Endothelial cell of umbilical vein (primary cell): ENCODE measurements at regions of chr15 and their contacts with region 1.

Region 1: GRCh38 chr15:61834076-61834697 is 226.1 kb downstream of the VPS13C start:
- DNase-seq: peak; percentile 72
- H3K4me3 ChIP-seq: no peak overlapping the region
- H3K27ac ChIP-seq: no peak overlapping the region
- H3K4me1 ChIP-seq: no peaks in the 10 kb centered on the region
- H3K27me3 ChIP-seq: peaks cover 4 to 7% of the 10 kb centered on the region in 2 experiments
- CTCF ChIP-seq: peak; percentile 87 to 98
- POLR2A ChIP-seq: no peak

Region 2: GRCh38 chr15:61169904-61170695 is 664.1 kb before region 1 on chr15:
- CTCF ChIA-PET with region 1: interaction called, 430 read pairs
- POLR2A ChIA-PET with region 1: no interaction called
- dilution Hi-C with region 1: no loop called
- intact Hi-C with region 1: loop called (anchors 1 kb)
- DNase-seq: no peak
- H3K4me3 ChIP-seq: no peak overlapping the region
- H3K27ac ChIP-seq: no peak overlapping the region
- H3K4me1 ChIP-seq: peaks cover 13% of the 10 kb centered on the region
- H3K27me3 ChIP-seq: no peaks in the 10 kb centered on the region
- CTCF ChIP-seq: no peak
- POLR2A ChIP-seq: no peak

Region 3: DNA sequence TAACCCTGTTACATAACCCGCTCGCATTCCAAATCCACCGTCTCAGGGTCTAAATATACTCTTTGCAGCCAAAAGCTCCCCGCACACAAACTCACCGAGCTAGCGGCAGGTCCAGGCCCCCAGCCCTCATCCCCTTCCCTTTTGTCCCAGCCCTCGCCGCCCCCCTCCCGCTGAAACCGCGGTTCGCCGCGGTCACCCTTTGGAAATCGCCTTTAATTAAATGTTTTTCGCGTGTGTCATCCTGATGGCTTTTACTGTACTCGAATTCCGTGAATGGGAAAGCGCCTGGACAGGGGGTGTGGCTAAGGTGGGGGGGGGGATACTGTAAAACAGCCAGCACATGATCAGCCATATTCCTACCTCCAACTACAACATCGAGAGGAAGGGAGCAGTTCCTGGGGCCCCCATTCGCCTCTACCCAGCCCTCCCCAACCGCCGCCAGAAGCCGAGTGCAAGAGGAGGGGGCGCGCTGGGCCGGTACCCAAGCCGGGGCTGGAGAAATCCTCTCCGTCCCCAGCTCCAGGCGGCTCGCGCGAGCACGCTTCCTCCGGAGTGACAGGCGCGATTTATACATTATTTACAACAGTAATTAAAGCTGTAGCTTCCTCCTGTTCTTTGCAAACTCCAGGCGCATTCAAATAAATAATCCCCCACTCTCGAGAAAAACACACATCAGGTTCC is 606.8 kb before region 1 on chr15:
- CTCF ChIA-PET with region 1: interaction called, 24 read pairs
- POLR2A ChIA-PET with region 1: no interaction called
- dilution Hi-C with region 1: no loop called
- intact Hi-C with region 1: no loop called
- DNase-seq: peak; percentile 41
- H3K4me3 ChIP-seq: peak overlapping the region; percentile 53 to 84 (median 72)
- H3K27ac ChIP-seq: no peak overlapping the region
- H3K4me1 ChIP-seq: peaks cover 9% of the 10 kb centered on the region
- H3K27me3 ChIP-seq: peaks cover 25 to 28% of the 10 kb centered on the region in 2 experiments
- CTCF ChIP-seq: no peak
- POLR2A ChIP-seq: no peak

Region 4: DNA sequence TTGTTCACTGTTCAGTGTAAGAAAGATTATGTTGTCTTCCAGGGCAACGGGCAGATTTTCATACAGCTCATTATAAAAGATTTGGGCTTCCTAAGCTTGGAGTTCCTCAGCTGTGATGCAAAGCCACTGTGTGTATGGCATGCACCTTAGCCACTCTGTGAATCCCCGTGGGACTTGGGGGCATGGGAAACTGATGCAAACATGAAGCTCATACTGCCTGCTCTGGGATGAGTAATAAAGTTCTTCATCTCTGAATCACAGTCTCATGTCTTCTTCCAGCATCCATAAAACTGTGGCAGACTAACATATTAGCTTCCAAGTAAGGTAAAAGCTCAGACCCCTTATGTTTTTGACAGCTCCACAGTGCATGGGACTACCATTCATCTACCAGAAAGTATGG is 450.8 kb before region 1 on chr15:
- CTCF ChIA-PET with region 1: no interaction called
- POLR2A ChIA-PET with region 1: no interaction called
- dilution Hi-C with region 1: no loop called
- intact Hi-C with region 1: no loop called
- DNase-seq: no peak
- H3K4me3 ChIP-seq: no peak overlapping the region
- H3K27ac ChIP-seq: no peak overlapping the region
- H3K4me1 ChIP-seq: no peaks in the 10 kb centered on the region
- H3K27me3 ChIP-seq: no peaks in the 10 kb centered on the region
- CTCF ChIP-seq: no peak
- POLR2A ChIP-seq: no peak

Region 5: DNA sequence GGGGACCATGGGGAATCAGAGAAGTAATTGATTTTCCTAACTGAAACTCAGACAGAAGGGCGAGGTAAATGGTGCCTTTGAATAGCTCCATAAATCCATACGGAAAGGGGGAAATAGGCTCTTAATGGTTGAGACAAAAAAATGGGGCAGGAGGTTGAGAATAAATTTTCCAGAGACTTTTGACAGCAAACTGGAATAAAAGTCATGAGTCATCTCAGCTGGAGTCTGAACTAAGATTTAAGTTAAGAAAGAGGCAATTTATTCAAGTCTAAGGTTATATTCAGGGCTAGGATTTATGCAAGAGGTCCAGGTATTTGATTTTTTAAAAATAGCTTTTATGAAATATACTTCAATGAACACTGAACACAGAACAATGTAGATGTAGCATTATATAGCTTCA is 366.4 kb before region 1 on chr15:
- CTCF ChIA-PET with region 1: no interaction called
- POLR2A ChIA-PET with region 1: no interaction called
- dilution Hi-C with region 1: no loop called
- intact Hi-C with region 1: no loop called
- DNase-seq: no peak
- H3K4me3 ChIP-seq: no peak overlapping the region
- H3K27ac ChIP-seq: no peak overlapping the region
- H3K4me1 ChIP-seq: no peaks in the 10 kb centered on the region
- H3K27me3 ChIP-seq: peaks cover 1 to 4% of the 10 kb centered on the region in 2 experiments
- CTCF ChIP-seq: no peak
- POLR2A ChIP-seq: no peak

Region 6: DNA sequence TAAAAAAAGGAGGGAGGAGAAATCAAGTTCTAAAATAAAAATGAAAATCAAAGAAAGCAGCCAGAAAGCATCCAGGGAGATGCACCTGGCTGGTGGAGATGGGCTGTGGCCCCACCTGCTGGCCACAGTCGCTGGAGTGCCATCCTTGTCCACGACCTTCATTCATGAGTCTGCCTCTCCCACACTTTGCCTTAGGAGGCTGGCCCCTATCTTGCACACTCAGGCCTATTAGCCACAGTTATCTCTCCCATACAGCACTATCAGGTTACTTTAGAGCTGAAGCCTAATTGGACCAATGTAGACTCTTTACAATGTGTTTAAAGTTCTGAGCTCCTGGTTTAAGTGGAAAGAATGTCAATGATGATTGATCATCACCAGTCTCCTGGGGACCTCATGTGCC is 213.0 kb before region 1 on chr15:
- CTCF ChIA-PET with region 1: interaction called, 22 read pairs
- POLR2A ChIA-PET with region 1: no interaction called
- dilution Hi-C with region 1: no loop called
- intact Hi-C with region 1: no loop called
- DNase-seq: peak; percentile 21
- H3K4me3 ChIP-seq: no peak overlapping the region
- H3K27ac ChIP-seq: no peak overlapping the region
- H3K4me1 ChIP-seq: no peaks in the 10 kb centered on the region
- H3K27me3 ChIP-seq: no peaks in the 10 kb centered on the region
- CTCF ChIP-seq: peak; percentile 39 to 69
- POLR2A ChIP-seq: no peak

Region 7: DNA sequence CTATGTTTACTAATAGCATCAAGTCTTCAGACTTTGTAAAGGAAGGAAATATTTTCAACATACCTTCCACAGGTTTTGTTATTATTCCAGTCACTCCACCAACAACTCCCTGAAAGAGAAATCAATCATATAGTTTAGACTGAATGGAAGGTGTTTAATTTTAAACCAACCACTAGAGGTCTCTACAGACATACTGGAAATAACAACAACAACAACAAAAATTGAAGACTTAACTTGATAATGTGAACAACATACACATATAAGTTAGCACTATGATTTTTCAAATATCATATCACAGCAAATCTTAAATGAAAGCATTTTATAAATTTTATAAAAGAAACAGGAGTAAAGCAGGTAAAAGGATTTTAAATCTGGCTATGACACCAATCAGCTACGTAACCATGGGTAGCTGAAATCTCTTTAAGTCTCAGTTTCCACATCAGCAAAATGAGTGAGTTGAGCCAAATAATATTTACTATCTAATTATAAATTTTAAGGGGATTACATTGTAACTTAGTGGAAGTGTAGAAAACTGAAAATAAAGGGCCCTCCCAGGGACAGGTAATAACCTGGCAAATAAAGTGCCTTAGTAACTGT is 37.8 kb after region 1 on chr15:
- CTCF ChIA-PET with region 1: interaction called, 12 read pairs
- POLR2A ChIA-PET with region 1: no interaction called
- dilution Hi-C with region 1: no loop called
- intact Hi-C with region 1: no loop called
- DNase-seq: peak; percentile 49
- H3K4me3 ChIP-seq: no peak overlapping the region
- H3K27ac ChIP-seq: no peak overlapping the region
- H3K4me1 ChIP-seq: no peaks in the 10 kb centered on the region
- H3K27me3 ChIP-seq: no peaks in the 10 kb centered on the region
- CTCF ChIP-seq: peak in 1 of 2 donors; percentile 31
- POLR2A ChIP-seq: no peak